Heart right ventricle (tissue), 16 donors: ENCODE measurements at regions of chr10 and their contacts with region 1.

Region 1: DNA sequence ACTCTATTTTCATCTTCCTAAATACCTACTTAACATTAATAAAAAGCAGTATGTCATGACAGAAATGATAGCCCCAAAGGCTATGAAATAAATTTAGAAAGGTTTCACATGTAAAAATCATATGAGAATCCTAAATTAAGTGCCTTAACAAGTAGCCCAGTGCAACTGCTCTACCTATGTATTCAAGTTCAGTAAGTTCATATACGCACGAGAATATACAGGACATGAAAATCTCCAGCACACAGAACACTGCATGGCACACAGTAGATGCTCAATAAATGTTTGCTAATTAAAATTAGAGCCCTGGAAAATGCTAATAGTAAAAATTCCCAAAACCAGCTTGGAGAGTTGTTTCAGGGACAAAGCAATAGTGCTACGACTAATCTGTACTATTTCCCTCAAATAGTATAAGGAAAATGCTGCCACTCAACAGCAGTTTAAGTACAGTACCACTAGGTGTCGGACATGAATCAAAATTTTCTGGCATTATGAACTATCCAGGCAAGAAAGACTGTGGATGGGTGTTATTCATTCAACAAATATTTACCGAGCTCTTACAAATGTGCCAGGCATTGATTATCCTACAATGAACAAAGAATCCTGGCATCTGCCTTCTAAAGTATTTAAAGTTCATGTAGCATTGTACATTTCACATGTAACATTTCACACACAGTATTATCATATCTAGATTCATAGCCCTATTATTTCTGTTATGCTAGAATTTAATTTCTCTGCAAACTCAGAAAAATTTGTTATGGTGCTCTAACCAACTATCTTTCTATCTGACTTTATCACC is 80.9 kb downstream of the ARHGAP21 start:
- DNase-seq: peak in 1 of 2 donors; percentile 41
- ATAC-seq: peak; percentile 62 to 91 (median 88)
- H3K4me3 ChIP-seq: no peak overlapping the region
- H3K27ac ChIP-seq: no peak overlapping the region
- H3K4me1 ChIP-seq: peaks cover 0 to 48% (median 25%) of the 10 kb centered on the region in 9 donors
- H3K27me3 ChIP-seq: no peaks in the 10 kb centered on the region
- CTCF ChIP-seq: peak; percentile 57 to 88 (median 77)

Region 2: GRCh38 chr10:24574578-24575155 is 68.2 kb before region 1 on chr10:
- intact Hi-C with region 1: no loop called
- DNase-seq: no peak
- ATAC-seq: no peak
- H3K4me3 ChIP-seq: no peak overlapping the region
- H3K27ac ChIP-seq: no peak overlapping the region
- H3K4me1 ChIP-seq: peaks cover 0 to 5% (median 0%) of the 10 kb centered on the region in 9 donors
- H3K27me3 ChIP-seq: no peaks in the 10 kb centered on the region
- CTCF ChIP-seq: no peak

Region 3: DNA sequence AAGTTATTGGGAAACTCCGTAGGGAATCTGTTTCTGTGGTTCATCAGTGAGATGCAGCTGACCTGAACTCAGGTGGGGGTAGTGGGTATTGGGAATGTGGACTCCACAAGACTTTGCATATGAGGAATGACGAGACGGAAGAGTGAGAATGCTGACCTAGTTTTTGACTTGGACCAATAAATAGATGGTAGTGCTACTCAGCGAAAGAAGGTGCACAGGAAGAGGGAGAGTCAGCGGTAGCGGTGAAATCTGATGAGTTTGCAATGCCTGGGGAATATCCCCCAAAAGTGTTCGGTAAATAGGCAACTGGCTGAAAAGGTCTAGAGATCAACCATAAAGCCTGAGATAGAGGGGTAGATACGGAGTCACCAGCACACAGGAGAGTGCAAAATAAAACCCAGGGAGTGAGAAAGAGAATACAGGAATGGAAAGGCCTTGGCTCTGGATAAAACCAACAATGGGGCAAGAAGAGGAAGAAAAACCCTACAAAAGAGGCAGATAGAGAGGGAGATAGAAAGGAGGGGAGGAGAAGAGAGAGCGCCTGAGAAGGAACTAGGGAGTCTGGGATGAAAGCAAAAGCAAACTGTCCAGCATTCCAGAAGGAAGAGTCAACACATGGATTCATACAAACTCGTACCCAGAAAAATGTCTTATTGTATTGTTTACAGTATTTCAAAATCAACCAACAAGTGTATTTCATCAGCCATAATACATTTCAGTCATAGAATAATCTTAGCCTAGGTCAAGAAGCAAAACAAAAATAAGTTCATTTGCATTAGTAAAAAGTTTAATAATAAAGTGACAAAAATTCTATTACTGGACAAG is 75.4 kb after region 1 on chr10:
- intact Hi-C with region 1: loop called in 9 of 10 experiments (anchors 5 to 10 kb)
- DNase-seq: no peak
- ATAC-seq: no peak
- H3K4me3 ChIP-seq: peak overlapping the region in 5 of 10 donors; percentile 1 to 86 (median 23)
- H3K27ac ChIP-seq: no peak overlapping the region
- H3K4me1 ChIP-seq: peaks cover 2 to 88% (median 80%) of the 10 kb centered on the region in 9 donors
- H3K27me3 ChIP-seq: no peaks in the 10 kb centered on the region
- CTCF ChIP-seq: no peak

Region 4: GRCh38 chr10:24952707-24953645 is 310.2 kb after region 1 on chr10:
- intact Hi-C with region 1: loop called in 1 of 10 experiments (anchors 5 kb)
- DNase-seq: peak; percentile 54 to 65
- ATAC-seq: peak; percentile 41 to 79 (median 64)
- H3K4me3 ChIP-seq: peak overlapping the region; percentile 51 to 73 (median 64)
- H3K27ac ChIP-seq: peak overlapping the region; percentile 55 to 92 (median 86)
- H3K4me1 ChIP-seq: peaks cover 0 to 30% (median 13%) of the 10 kb centered on the region in 9 donors
- H3K27me3 ChIP-seq: peaks cover 0 to 6% (median 0%) of the 10 kb centered on the region in 7 donors
- CTCF ChIP-seq: peak in 8 of 9 donors; percentile 19 to 57 (median 44)

Region 5: GRCh38 chr10:24989867-24990266 is 347.0 kb after region 1 on chr10:
- intact Hi-C with region 1: loop called (anchors 2 to 10 kb)
- DNase-seq: no peak
- ATAC-seq: no peak
- H3K4me3 ChIP-seq: no peak overlapping the region
- H3K27ac ChIP-seq: no peak overlapping the region
- H3K4me1 ChIP-seq: peaks cover 0 to 17% (median 4%) of the 10 kb centered on the region in 9 donors
- H3K27me3 ChIP-seq: no peaks in the 10 kb centered on the region
- CTCF ChIP-seq: peak in 6 of 9 donors; percentile 36 to 55 (median 44)